H1 (cell line): ENCODE measurements at regions of chr19 and their contacts with region 1.

Region 1: GRCh38 chr19:3100865-3101730 is 6.9 kb downstream of the GNA11 start:
- DNase-seq: no peak
- H3K4me3 ChIP-seq: no peak overlapping the region
- H3K27ac ChIP-seq: no peak overlapping the region; the same call in 1 of the 2 replicates
- H3K4me1 ChIP-seq: peaks cover 0 to 8% (median 6%) of the 10 kb centered on the region in 4 experiments; a peak in 5 of 7 replicates
- H3K27me3 ChIP-seq: no peaks in the 10 kb centered on the region
- CTCF ChIP-seq: no peak
- EP300 ChIP-seq: no peak
- POLR2A ChIP-seq: no peak
- RAD21 ChIP-seq: no peak

Region 2: GRCh38 chr19:3116255-3116602 is 15.1 kb after region 1 on chr19:
- CTCF ChIA-PET with region 1: interaction called, 41 read pairs
- POLR2A ChIA-PET with region 1: no interaction called
- DNase-seq: peak in 1 of 2 experiments; percentile 31
- H3K4me3 ChIP-seq: no peak overlapping the region
- H3K27ac ChIP-seq: no peak overlapping the region
- H3K4me1 ChIP-seq: peaks cover 0 to 14% (median 6%) of the 10 kb centered on the region in 4 experiments; a peak in 3 of 7 replicates
- H3K27me3 ChIP-seq: peaks cover 0 to 2% (median 0%) of the 10 kb centered on the region in 4 experiments; a peak in 1 of 7 replicates
- CTCF ChIP-seq: no peak
- EP300 ChIP-seq: no peak
- POLR2A ChIP-seq: no peak
- RAD21 ChIP-seq: no peak